ENCODE measurements at regions of chr16 and their contacts with region 1.

Region 1: GRCh38 chr16:27253526-27253930 is 15.0 kb downstream of the NSMCE1 start:
- DNase-seq: no peak
- ATAC-seq: peak; percentile 40
- H3K4me3 Mint-ChIP-seq: peak overlapping the region; percentile 65
- H3K27ac Mint-ChIP-seq: peak overlapping the region; percentile 88
- H3K4me1 Mint-ChIP-seq: peaks cover 65% of the 10 kb centered on the region
- H3K27me3 Mint-ChIP-seq: no peaks in the 10 kb centered on the region
- CTCF ChIP-seq: no peak

Region 2: DNA sequence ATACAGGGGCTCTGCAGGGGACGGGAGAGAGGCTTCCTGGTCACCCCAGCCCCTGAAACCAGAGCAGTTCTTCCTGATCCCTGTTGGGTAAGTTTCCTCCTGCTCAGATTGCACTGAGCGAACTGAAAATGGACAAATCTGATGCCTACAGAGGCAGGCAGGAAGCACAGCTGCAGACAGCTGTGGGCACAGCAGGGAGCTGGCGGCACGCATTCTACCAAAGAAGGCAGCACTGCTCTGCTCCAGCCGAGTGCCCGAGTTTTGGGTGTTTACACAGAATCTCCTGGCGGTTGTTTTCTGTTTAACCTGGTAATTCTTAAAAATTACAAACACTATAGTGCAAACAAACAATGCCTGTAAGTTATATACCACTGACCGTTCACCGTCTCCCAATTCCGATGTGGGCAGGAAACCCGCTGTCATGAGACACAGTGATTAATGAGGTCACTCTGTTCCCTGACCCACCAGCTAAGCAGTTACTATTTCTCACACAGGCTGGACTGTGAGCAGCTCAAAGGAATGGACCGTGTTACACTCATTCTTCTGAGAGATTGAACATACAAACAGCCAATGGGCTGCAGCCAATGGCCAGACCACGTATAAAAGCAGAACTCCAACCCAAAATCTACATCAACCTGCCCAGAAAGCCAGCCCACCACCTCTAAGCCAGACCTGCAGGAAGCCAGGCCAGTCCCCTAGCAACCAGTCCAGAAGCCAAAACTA is 10.5 kb before region 1 on chr16:
- CTCF ChIA-PET with region 1: no interaction called
- POLR2A ChIA-PET with region 1: interaction called, 52 read pairs
- intact Hi-C with region 1: loop called (anchors 1 kb)
- DNase-seq: no peak
- ATAC-seq: peak; percentile 69
- H3K4me3 Mint-ChIP-seq: peak overlapping the region; percentile 63
- H3K27ac Mint-ChIP-seq: peak overlapping the region; percentile 61
- H3K4me1 Mint-ChIP-seq: peaks cover 63% of the 10 kb centered on the region
- H3K27me3 Mint-ChIP-seq: no peaks in the 10 kb centered on the region
- CTCF ChIP-seq: no peak

Region 3: DNA sequence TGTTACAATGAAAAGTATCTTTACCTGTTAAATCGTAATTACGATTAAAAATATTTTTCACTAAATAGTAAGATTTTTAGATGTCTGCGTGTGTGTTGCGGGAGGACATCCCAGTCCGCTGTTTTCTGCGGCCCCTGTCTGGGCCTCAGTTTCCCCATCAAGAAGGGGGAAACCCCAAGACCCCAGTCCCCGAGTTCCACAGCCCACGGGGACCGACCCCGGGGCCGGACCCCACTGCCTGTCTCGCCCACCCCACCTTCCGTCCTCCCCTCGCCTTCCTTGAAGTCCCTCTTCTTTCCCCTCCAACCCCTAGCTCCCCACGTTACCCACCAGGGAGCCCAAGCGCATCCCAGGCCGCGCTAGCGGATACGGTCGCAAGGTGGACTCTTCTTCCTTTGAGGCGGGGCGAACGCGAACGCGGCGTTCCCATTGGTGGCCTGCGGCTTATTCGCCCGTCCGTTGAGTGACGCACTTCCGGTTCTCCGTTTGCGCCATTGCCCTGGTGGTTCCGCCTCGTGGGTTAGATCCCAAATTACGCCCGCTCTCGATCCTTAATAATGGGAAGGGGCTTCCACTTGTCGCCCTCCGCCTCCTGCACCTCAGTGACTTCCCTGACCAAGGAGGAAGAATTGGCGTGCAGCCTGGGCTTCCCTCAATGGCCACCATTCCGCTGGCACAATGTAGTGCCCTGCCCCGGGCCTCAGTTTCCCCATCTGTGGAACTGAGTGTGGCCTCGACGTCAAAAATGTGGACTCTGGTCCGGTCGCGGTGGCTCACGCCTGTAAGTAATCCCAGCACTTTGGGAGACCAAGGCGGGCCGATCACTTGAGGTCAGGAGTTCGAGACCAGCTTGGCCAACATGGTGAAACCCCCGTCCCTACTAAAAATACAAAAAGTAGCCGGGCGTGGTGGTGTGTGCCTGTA is 15.1 kb after region 1 on chr16 and contains the start of gene NSMCE1:
- CTCF ChIA-PET with region 1: interaction called, 7 read pairs
- POLR2A ChIA-PET with region 1: interaction called, 18 read pairs
- intact Hi-C with region 1: loop called (anchors 2 kb)
- DNase-seq: peak; percentile 92
- ATAC-seq: peak; percentile 97
- H3K4me3 Mint-ChIP-seq: peak within 1 kb of the TSS; percentile 96
- H3K27ac Mint-ChIP-seq: peak within 1 kb of the TSS; percentile 99
- H3K4me1 Mint-ChIP-seq: peaks cover 73% of the 10 kb centered on the region
- H3K27me3 Mint-ChIP-seq: no peaks in the 10 kb centered on the region
- CTCF ChIP-seq: no peak
- total RNA-seq, gene NSMCE1: 61.0 and 68.3 TPM in 2 replicates

Region 4: DNA sequence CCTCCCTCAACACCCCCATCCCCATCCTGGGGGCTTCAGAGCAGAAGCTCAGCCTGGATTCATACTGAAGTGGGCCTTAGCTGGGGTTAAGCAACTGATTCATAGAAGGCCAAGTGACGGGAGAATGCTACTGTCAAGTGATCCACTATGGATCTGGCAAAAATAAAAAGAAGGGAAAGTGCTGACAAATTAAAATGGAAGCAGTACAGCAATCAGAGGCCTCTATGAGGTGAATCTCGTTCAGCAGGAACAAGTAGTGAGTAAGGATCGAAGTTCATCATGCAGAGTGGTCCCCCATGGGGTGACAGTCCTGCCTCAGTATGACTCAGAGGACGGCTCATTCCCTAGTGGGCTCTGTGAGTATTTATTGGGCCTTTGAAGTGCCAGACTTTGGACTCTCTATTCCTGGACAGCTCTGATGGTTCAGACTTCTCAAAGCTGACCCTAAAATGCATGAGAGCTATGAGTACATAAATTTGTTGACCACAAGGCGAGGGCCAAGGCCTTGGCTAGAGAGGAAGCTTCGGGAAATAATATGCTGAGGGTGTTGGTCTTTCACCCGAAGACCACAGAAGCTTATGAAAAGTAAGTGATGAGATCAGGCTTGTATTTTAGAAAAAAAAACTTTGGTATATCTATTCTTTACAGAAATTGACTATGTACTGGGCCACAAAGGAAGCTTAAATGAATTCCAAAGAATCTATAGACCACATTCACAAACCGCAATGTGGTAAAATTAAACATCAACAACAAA is 20.3 kb after region 1 on chr16:
- CTCF ChIA-PET with region 1: interaction called, 7 read pairs
- POLR2A ChIA-PET with region 1: interaction called, 18 read pairs
- intact Hi-C with region 1: loop called (anchors 2 kb)
- DNase-seq: no peak
- ATAC-seq: peak; percentile 86
- H3K4me3 Mint-ChIP-seq: peak overlapping the region; percentile 25
- H3K27ac Mint-ChIP-seq: peak overlapping the region; percentile 93
- H3K4me1 Mint-ChIP-seq: peaks cover 62% of the 10 kb centered on the region
- H3K27me3 Mint-ChIP-seq: no peaks in the 10 kb centered on the region
- CTCF ChIP-seq: no peak

Region 5: DNA sequence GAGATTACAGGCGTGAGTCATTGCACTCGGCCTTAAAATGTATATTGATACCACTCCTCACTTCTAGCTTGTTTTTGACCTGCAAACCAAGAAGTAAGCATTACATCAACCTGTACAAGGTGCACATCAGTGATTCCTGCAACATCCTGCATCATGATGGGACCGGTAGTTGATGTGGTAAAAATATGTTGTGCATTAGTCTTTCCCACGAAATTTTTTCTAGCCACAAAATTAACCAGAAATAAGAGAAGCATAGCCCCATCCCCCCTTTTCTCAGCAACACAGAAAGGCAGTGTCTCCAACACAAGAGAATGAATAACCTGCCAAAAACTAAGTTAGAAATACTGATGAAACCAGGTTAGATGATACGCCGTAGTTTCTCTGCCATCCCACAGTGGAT is 36.1 kb after region 1 on chr16:
- CTCF ChIA-PET with region 1: no interaction called
- POLR2A ChIA-PET with region 1: no interaction called
- intact Hi-C with region 1: no loop called
- DNase-seq: no peak
- ATAC-seq: no peak
- H3K4me3 Mint-ChIP-seq: no peak overlapping the region
- H3K27ac Mint-ChIP-seq: no peak overlapping the region
- H3K4me1 Mint-ChIP-seq: peaks cover 44% of the 10 kb centered on the region
- H3K27me3 Mint-ChIP-seq: no peaks in the 10 kb centered on the region
- CTCF ChIP-seq: no peak

Measured in activated B cell treated with CpG ODN at 0.5 μM for 24 hours (primary cell).